ENCODE measurements at regions of chrX and their contacts with region 1.

Region 1: GRCh38 chrX:45322382-45322781 is 121.7 kb upstream of the DIPK2B start:
- DNase-seq: peak; percentile 24 to 56 (median 36)
- H3K4me3 ChIP-seq: no peak overlapping the region
- H3K27ac ChIP-seq: no peak overlapping the region
- H3K4me1 ChIP-seq: peaks cover 3% of the 10 kb centered on the region
- H3K27me3 ChIP-seq: no peaks in the 10 kb centered on the region
- CTCF ChIP-seq: peak in 2 of 3 donors; percentile 33 to 47
- EP300 ChIP-seq: no peak
- POLR2A ChIP-seq: no peak

Region 2: GRCh38 chrX:45758319-45758718 is 435.9 kb after region 1 on chrX:
- intact Hi-C with region 1: loop called in 1 of 4 experiments (anchors 10 kb)
- DNase-seq: no peak
- H3K4me3 ChIP-seq: no peak overlapping the region
- H3K27ac ChIP-seq: no peak overlapping the region
- H3K4me1 ChIP-seq: peaks cover 2% of the 10 kb centered on the region
- H3K27me3 ChIP-seq: no peaks in the 10 kb centered on the region
- CTCF ChIP-seq: no peak
- EP300 ChIP-seq: no peak
- POLR2A ChIP-seq: no peak

Region 3: GRCh38 chrX:46408553-46409407 is 1086.4 kb after region 1 on chrX:
- intact Hi-C with region 1: loop called in 1 of 4 experiments (anchors 10 kb)
- DNase-seq: peak; percentile 68 to 87 (median 84)
- H3K4me3 ChIP-seq: no peak overlapping the region
- H3K27ac ChIP-seq: no peak overlapping the region
- H3K4me1 ChIP-seq: peaks cover 3% of the 10 kb centered on the region
- H3K27me3 ChIP-seq: no peaks in the 10 kb centered on the region
- CTCF ChIP-seq: peak; percentile 40 to 65 (median 63)
- EP300 ChIP-seq: no peak
- POLR2A ChIP-seq: no peak

Measured in ovary (tissue), 10 donors.